ENCODE measurements at regions of chr6 and their contacts with region 1.

Region 1: GRCh38 chr6:42453031-42453653 is 1.4 kb upstream of the TRERF1 start:
- DNase-seq: peak; percentile 63 to 89 (median 72)
- ATAC-seq: peak; percentile 75 to 76
- H3K4me3 Mint-ChIP-seq: peak overlapping the region; percentile 87 to 100 (median 94)
- H3K27ac Mint-ChIP-seq: peak overlapping the region in 9 of 10 donors; percentile 37 to 88 (median 73)
- H3K4me1 Mint-ChIP-seq: peaks cover 24 to 43% (median 37%) of the 10 kb centered on the region in 4 donors
- H3K27me3 Mint-ChIP-seq: no peaks in the 10 kb centered on the region

Region 2: GRCh38 chr6:42279144-42279781 is 173.9 kb before region 1 on chr6:
- POLR2A ChIA-PET with region 1: interaction called, 20 read pairs
- DNase-seq: peak in 5 of 10 donors; percentile 16 to 43 (median 31)
- ATAC-seq: peak; percentile 11 to 12
- H3K4me3 Mint-ChIP-seq: peak overlapping the region; percentile 43 to 85 (median 66)
- H3K27ac Mint-ChIP-seq: peak overlapping the region; percentile 85 to 99 (median 94)
- H3K4me1 Mint-ChIP-seq: peaks cover 37 to 72% (median 59%) of the 10 kb centered on the region in 4 donors
- H3K27me3 Mint-ChIP-seq: no peaks in the 10 kb centered on the region

Region 3: GRCh38 chr6:42374018-42374659 is 79.0 kb before region 1 on chr6:
- POLR2A ChIA-PET with region 1: interaction called, 49 read pairs
- DNase-seq: peak in 1 of 10 donors; percentile 41
- ATAC-seq: peak; percentile 61 to 79
- H3K4me3 Mint-ChIP-seq: peak overlapping the region in 8 of 10 donors; percentile 13 to 72 (median 56)
- H3K27ac Mint-ChIP-seq: peak overlapping the region; percentile 74 to 94 (median 90)
- H3K4me1 Mint-ChIP-seq: peaks cover 39 to 83% (median 75%) of the 10 kb centered on the region in 4 donors
- H3K27me3 Mint-ChIP-seq: no peaks in the 10 kb centered on the region

Region 4: GRCh38 chr6:42402184-42402583 is 51.0 kb before region 1 on chr6:
- POLR2A ChIA-PET with region 1: interaction called, 18 read pairs
- DNase-seq: no peak
- ATAC-seq: peak; percentile 49 to 72
- H3K4me3 Mint-ChIP-seq: peak overlapping the region in 7 of 10 donors; percentile 7 to 78 (median 26)
- H3K27ac Mint-ChIP-seq: peak overlapping the region in 9 of 10 donors; percentile 29 to 93 (median 75)
- H3K4me1 Mint-ChIP-seq: peaks cover 46 to 91% (median 87%) of the 10 kb centered on the region in 4 donors
- H3K27me3 Mint-ChIP-seq: no peaks in the 10 kb centered on the region

Region 5: GRCh38 chr6:42423244-42423643 is 29.9 kb before region 1 on chr6:
- POLR2A ChIA-PET with region 1: interaction called, 20 read pairs
- DNase-seq: peak in 3 of 10 donors; percentile 14 to 29 (median 24)
- ATAC-seq: peak; percentile 41 to 76
- H3K4me3 Mint-ChIP-seq: peak overlapping the region; percentile 40 to 87 (median 79)
- H3K27ac Mint-ChIP-seq: peak overlapping the region in 9 of 10 donors; percentile 27 to 93 (median 81)
- H3K4me1 Mint-ChIP-seq: peaks cover 32 to 73% (median 68%) of the 10 kb centered on the region in 4 donors
- H3K27me3 Mint-ChIP-seq: no peaks in the 10 kb centered on the region

Region 6: DNA sequence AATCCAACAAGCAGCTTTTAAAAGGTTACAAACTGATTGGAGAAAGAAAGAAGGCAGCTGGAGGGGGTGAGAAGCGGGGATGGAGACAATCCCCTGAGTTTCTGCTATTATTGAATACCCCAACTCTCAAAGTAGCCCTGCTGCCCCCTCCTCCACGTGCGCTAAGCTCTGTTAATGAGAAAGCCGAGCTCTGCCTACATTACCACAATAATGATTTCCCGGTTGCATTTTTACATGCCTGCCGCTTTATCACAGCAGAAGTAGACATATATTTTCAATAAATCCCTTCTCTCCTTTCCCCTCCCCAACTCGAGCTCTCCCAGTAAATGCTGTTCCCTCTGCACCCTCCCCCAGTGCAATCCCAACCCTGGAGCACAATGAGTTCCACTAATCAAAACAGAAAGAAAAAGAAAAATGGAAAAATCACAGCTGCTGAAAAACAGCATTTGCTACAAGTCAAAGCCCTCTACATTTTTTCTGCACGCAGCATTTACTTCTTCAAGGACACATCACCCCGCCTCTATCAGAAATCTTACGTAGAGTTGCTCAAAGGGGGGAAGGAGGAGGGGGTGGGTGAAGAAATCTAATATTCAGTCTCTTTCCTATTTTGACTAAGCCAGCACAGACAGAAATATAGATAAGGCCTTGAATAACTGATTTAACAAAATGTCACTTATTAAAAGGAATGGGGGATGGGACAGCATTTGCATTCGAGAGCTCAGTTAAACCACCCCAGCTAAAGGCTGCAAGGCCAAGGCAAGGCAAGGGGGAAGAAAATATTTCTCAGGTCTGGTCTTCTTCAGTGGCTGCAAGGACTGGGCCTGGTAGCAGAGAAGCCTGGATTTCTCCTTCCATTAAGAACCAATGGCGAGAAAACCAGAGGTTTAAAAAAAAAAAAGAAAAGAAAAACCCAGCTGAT is 12.1 kb before region 1 on chr6:
- POLR2A ChIA-PET with region 1: interaction called, 32 read pairs
- DNase-seq: no peak
- ATAC-seq: no peak
- H3K4me3 Mint-ChIP-seq: peak overlapping the region in 8 of 10 donors; percentile 23 to 59 (median 37)
- H3K27ac Mint-ChIP-seq: peak overlapping the region; percentile 4 to 92 (median 72)
- H3K4me1 Mint-ChIP-seq: peaks cover 40 to 82% (median 68%) of the 10 kb centered on the region in 4 donors
- H3K27me3 Mint-ChIP-seq: no peaks in the 10 kb centered on the region

Region 7: DNA sequence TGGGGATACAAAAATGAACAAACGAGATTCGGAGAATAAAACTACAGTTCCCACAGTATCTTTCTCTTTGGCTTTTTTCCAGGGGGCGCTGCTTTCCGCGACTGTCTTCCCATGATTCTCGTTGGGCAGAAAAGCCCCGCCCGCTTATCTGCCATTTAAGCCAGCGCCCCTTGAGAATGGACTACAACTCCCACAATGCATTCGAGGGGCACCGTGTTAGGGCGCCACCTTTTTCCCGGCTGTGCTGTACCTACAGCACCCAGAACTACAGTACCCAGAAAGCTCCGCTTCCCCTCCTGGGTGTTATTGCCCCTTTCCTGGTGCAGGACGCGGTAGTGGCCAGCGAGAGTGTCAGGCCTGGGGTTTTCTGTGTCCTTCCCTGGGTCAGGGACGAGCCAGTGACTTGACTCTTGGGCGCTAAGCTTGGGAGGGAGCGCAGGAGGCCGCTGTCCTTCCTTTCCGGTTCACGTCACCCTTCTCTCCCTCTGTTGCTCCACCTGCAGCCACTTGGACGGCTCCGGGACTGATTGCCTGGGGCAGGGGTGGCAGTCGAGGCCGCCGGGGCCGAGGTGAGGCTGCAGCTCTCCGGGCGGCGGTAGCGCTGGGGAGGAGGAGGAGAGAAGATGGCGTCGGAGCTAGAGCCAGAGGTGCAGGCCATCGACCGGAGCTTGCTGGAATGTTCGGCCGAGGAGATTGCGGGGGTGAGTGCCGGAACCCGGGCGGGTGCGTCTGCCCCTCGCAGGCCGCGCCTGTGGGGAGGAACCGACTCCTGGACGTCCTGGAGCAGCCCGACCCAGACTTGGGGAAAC is 110.8 kb after region 1 on chr6 and contains the start of gene UBR2:
- POLR2A ChIA-PET with region 1: interaction called, 13 read pairs
- DNase-seq: peak; percentile 74 to 98 (median 92)
- ATAC-seq: peak; percentile 94 to 96
- H3K4me3 Mint-ChIP-seq: peak within 1 kb of the TSS; percentile 94 to 100 (median 96)
- H3K27ac Mint-ChIP-seq: peak within 1 kb of the TSS; percentile 89 to 98 (median 96)
- H3K4me1 Mint-ChIP-seq: peaks cover 15 to 44% (median 33%) of the 10 kb centered on the region in 4 donors
- H3K27me3 Mint-ChIP-seq: no peaks in the 10 kb centered on the region
- polyA plus RNA-seq, gene UBR2: 7.0 to 9.1 (median 8.1) TPM

Measured in naive thymus-derived CD8-positive, alpha-beta T cell (primary cell).